OCI-LY7 (cell line): ENCODE measurements at regions of chr9 and their contacts with region 1.

Region 1: GRCh38 chr9:121939643-121940042 is 153.5 kb downstream of the TTLL11 start:
- DNase-seq: peak; percentile 79
- H3K4me3 ChIP-seq: peak overlapping the region; percentile 48
- H3K27ac ChIP-seq: peak overlapping the region; percentile 99
- H3K4me1 ChIP-seq: peaks cover 89% of the 10 kb centered on the region
- CTCF ChIP-seq: no peak

Region 2: GRCh38 chr9:121892706-121893105 is 46.9 kb before region 1 on chr9:
- CTCF ChIA-PET with region 1: no interaction called
- POLR2A ChIA-PET with region 1: no interaction called
- intact Hi-C with region 1: loop called (anchors 2 kb)
- DNase-seq: no peak
- H3K4me3 ChIP-seq: no peak overlapping the region
- H3K27ac ChIP-seq: no peak overlapping the region
- H3K4me1 ChIP-seq: peaks cover 33% of the 10 kb centered on the region
- CTCF ChIP-seq: no peak